ENCODE measurements at regions of chr11 and their contacts with region 1.

Region 1: DNA sequence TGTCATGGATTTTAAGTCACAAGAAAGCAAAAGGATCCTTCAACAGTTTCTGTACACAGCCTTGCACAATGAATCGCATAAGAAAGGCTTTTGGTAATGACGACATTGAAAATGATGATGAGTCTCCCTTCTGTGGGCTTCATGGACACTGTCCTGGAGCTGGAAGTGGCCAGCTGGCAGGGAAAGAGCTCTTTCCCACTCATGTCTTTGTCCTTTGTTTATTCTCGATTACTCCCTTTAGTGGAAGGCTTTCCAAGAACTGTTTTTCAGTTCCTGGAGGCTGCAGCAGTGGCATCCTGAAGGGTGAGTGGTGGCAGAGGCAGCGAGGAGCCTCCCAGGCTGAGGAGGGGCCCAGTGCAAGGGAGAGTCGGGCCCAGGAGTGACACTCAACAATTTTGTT is 505.2 kb downstream of the NTM start:
- DNase-seq: no peak
- H3K4me3 ChIP-seq: no peak overlapping the region
- H3K27ac ChIP-seq: peak overlapping the region in 1 of 4 donors; percentile 6
- H3K4me1 ChIP-seq: no peaks in the 10 kb centered on the region
- H3K27me3 ChIP-seq: no peaks in the 10 kb centered on the region
- CTCF ChIP-seq: no peak
- EP300 ChIP-seq: no peak
- POLR2A ChIP-seq: no peak

Region 2: GRCh38 chr11:131609337-131609736 is 266.3 kb before region 1 on chr11:
- in situ Hi-C with region 1: no loop called
- intact Hi-C with region 1: loop called (anchors 5 kb)
- DNase-seq: no peak
- H3K4me3 ChIP-seq: no peak overlapping the region
- H3K27ac ChIP-seq: no peak overlapping the region
- H3K4me1 ChIP-seq: no peaks in the 10 kb centered on the region
- H3K27me3 ChIP-seq: no peaks in the 10 kb centered on the region
- CTCF ChIP-seq: no peak
- EP300 ChIP-seq: no peak
- POLR2A ChIP-seq: no peak